ENCODE measurements at regions of chr1 and their contacts with region 1.

Region 1: DNA sequence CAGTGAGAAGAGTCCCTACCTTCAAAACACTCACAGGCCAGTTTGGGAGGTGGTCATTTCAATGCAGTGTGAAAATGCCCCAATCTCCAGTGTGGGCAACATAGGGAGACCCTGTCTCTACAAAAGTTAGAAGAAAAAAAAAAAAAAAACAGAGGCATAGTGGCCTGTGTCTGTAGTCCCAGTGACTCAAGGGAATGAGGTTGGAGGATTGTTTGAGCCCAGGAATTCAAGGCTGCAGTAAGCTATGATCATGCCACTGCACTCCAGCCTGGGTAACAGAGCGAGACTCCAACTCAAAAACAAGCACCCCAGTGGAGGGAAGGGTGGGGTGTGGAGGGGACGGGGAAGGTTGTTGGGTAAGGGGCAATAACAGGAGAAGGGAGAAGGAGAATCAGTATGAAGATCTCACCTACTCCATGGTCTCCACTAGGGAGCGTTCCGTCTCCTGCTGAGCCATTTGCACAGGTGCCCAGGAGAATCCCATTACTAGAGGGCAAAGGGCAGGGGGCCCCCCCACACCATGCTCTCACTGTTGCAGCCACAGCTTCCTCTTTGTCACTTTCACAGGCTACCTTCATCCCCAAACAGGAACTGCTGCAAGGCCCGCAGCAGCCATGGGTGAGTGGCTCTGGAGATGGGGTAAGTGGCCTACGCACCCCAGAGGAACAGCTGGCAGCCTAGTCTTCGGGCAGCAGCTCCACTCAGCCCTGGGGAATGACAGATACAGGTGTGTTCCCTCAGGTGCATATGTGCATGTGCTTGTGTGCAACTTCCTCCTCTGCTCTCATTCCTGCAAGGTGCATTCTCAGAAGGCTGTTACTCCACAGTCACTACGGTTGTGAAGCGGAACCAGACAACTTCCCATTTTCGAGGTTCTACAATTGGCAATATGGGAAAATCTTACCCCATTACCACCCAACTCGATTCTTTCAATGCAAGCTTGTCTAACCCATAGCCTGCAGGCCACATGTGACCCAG is 87.9 kb upstream of the LYST start:
- DNase-seq: peak; percentile 80
- ATAC-seq: peak; percentile 82
- H3K4me3 Mint-ChIP-seq: no peak overlapping the region
- H3K27ac Mint-ChIP-seq: peak overlapping the region; percentile 26
- H3K4me1 Mint-ChIP-seq: peaks cover 52% of the 10 kb centered on the region
- H3K27me3 Mint-ChIP-seq: no peaks in the 10 kb centered on the region
- CTCF ChIP-seq: no peak

Region 2: GRCh38 chr1:235873045-235873444 is 81.5 kb before region 1 on chr1:
- CTCF ChIA-PET with region 1: interaction called, 5 read pairs
- POLR2A ChIA-PET with region 1: interaction called, 4 read pairs
- intact Hi-C with region 1: loop called (anchors 2 kb)
- DNase-seq: peak; percentile 76
- ATAC-seq: peak; percentile 73
- H3K4me3 Mint-ChIP-seq: no peak overlapping the region
- H3K27ac Mint-ChIP-seq: peak overlapping the region; percentile 98
- H3K4me1 Mint-ChIP-seq: peaks cover 66% of the 10 kb centered on the region
- H3K27me3 Mint-ChIP-seq: no peaks in the 10 kb centered on the region
- CTCF ChIP-seq: no peak

Region 3: GRCh38 chr1:235917267-235917811 is 37.3 kb before region 1 on chr1:
- CTCF ChIA-PET with region 1: no interaction called
- POLR2A ChIA-PET with region 1: no interaction called
- intact Hi-C with region 1: loop called (anchors 5 kb)
- DNase-seq: peak; percentile 83
- ATAC-seq: peak; percentile 97
- H3K4me3 Mint-ChIP-seq: no peak overlapping the region
- H3K27ac Mint-ChIP-seq: peak overlapping the region; percentile 92
- H3K4me1 Mint-ChIP-seq: peaks cover 45% of the 10 kb centered on the region
- H3K27me3 Mint-ChIP-seq: no peaks in the 10 kb centered on the region
- CTCF ChIP-seq: no peak

Region 4: GRCh38 chr1:236051242-236051791 is 96.7 kb after region 1 on chr1:
- CTCF ChIA-PET with region 1: no interaction called
- POLR2A ChIA-PET with region 1: no interaction called
- intact Hi-C with region 1: no loop called
- DNase-seq: no peak
- ATAC-seq: no peak
- H3K4me3 Mint-ChIP-seq: no peak overlapping the region
- H3K27ac Mint-ChIP-seq: no peak overlapping the region
- H3K4me1 Mint-ChIP-seq: no peaks in the 10 kb centered on the region
- H3K27me3 Mint-ChIP-seq: peaks cover 19% of the 10 kb centered on the region
- CTCF ChIP-seq: no peak

Measured in activated CD8-positive, alpha-beta T cell treated with anti-CD3 and anti-CD28 coated beads for 36 hours (primary cell).